Adrenal gland (tissue), 19 donors: ENCODE measurements at regions of chr11 and their contacts with region 1.

Region 1: DNA sequence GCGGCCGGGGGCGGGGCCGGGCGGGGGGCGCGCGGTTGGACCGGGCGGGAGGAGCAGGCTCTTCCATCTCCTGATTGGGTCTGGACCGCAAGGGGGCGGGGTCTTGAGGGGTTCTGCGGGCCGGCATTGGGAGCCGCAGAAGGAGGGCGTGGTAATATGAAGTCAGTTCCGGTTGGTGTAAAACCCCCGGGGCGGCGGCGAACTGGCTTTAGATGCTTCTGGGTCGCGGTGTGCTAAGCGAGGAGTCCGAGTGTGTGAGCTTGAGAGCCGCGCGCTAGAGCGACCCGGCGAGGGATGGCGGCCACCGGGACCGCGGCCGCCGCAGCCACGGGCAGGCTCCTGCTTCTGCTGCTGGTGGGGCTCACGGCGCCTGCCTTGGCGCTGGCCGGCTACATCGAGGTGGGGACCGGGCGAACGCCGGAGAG is at the start of gene APLP2:
- DNase-seq: peak; percentile 99 to 100 (median 99)
- H3K4me3 ChIP-seq: peak within 1 kb of the TSS; percentile 64 to 98 (median 70)
- H3K27ac ChIP-seq: peak within 1 kb of the TSS; percentile 79 to 96 (median 95)
- H3K4me1 ChIP-seq: peaks cover 7 to 16% of the 10 kb centered on the region in 2 donors
- H3K27me3 ChIP-seq: no peaks in the 10 kb centered on the region
- CTCF ChIP-seq: no peak
- POLR2A ChIP-seq: peak; percentile 93 to 95
- total RNA-seq, gene APLP2: 210 to 374 (median 296) TPM

Region 2: DNA sequence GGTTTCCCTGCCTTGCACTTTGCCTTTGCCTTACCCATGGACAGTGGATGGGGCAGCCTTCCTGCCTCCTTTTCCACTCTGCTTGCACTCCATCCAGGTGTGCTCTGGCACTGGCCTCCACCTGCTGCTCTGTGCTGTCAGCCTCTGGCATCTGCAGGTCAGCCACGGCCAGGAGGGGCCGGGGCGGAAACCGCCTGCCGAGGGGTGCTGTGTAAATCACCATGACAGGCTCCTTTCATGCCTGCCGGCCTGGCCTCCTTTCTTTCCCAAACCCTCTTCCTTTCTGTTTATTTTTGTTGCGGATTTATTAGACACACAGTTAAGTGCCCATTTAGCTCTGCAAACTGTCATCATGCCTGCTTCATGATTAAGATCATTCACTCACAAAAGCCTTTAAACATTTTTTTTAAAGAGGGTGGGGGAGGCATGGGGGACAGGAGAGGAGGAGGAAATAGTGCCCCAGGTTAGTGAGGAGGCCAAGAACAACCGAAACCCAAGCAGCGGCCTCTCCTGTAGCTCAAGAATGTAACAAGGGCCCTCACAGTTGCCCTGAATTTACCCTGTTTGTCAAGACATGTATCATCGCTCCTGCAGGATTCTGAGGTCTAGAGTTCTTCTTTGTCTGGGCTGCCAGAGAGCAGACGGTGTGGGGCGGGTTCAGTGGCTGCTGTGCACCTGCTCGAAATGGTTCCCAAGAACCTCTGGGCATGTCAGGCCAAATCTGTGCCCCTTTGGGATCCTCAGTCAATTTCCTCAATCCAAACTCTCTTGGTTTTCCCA is 610.8 kb before region 1 on chr11:
- intact Hi-C with region 1: no loop called
- DNase-seq: no peak
- H3K4me3 ChIP-seq: no peak overlapping the region
- H3K27ac ChIP-seq: no peak overlapping the region
- H3K4me1 ChIP-seq: no peaks in the 10 kb centered on the region
- H3K27me3 ChIP-seq: no peaks in the 10 kb centered on the region
- CTCF ChIP-seq: no peak
- POLR2A ChIP-seq: no peak

Region 3: DNA sequence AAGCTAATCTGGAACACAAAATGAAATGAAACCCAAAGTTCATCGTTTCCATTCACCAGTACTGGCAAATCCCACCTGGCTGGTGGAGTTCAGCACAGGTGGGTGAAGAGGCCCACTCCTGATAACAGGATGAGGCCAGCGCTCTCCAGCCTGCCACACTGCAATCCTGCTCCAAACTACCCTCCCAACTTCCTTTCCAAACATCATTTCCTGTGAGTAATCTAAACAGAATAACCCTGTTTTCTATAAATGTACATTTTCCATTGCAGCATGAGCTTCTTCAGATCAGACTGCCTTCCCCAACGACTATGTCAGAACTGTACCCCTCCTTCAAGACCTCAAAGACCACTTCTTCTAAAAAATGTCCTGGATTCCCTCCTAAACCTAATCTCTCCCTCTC is 158.4 kb before region 1 on chr11:
- intact Hi-C with region 1: no loop called
- DNase-seq: no peak
- H3K4me3 ChIP-seq: no peak overlapping the region
- H3K27ac ChIP-seq: no peak overlapping the region
- H3K4me1 ChIP-seq: no peaks in the 10 kb centered on the region
- H3K27me3 ChIP-seq: no peaks in the 10 kb centered on the region
- CTCF ChIP-seq: no peak
- POLR2A ChIP-seq: no peak

Region 4: DNA sequence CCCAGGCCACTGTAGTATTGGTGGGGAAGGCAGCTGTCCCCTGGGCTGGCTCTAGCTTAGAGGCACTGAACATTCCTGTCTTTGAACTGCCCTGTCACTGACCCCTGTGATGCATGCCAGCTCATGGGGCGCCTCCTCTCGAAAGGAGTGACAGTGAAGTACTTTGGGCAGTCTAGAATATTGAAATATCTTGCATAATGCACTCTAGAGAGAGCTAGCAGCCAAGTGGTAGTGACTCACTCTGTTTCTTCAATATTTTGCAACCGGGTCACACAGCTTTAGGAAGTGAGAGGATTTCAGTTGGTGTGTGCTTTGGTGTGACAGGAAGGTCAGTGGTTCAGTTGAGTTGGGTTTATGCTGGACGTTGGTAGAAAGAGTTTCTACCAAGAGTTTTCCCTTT is 54.4 kb after region 1 on chr11:
- intact Hi-C with region 1: loop called (anchors 10 kb)
- DNase-seq: peak; percentile 57 to 95 (median 92)
- H3K4me3 ChIP-seq: no peak overlapping the region
- H3K27ac ChIP-seq: peak overlapping the region in 4 of 5 donors; percentile 55 to 87 (median 78)
- H3K4me1 ChIP-seq: peaks cover 12 to 14% of the 10 kb centered on the region in 2 donors
- H3K27me3 ChIP-seq: no peaks in the 10 kb centered on the region
- CTCF ChIP-seq: no peak
- POLR2A ChIP-seq: no peak